ENCODE measurements at regions of chr6 and their contacts with region 1.

Region 1: GRCh38 chr6:37483917-37484785 is 15.5 kb downstream of the CCDC167 start:
- DNase-seq: peak; percentile 53
- H3K4me3 Mint-ChIP-seq: no peak overlapping the region
- H3K27ac Mint-ChIP-seq: no peak overlapping the region
- H3K4me1 Mint-ChIP-seq: peaks cover 15% of the 10 kb centered on the region
- H3K27me3 Mint-ChIP-seq: no peaks in the 10 kb centered on the region

Region 2: GRCh38 chr6:37516076-37516919 is 32.1 kb after region 1 on chr6:
- intact Hi-C with region 1: loop called (anchors 1 kb)
- DNase-seq: peak; percentile 81
- H3K4me3 Mint-ChIP-seq: peak overlapping the region; percentile 75
- H3K27ac Mint-ChIP-seq: peak overlapping the region; percentile 92
- H3K4me1 Mint-ChIP-seq: peaks cover 57% of the 10 kb centered on the region
- H3K27me3 Mint-ChIP-seq: peaks cover 9% of the 10 kb centered on the region

Region 3: GRCh38 chr6:37653933-37654565 is 169.9 kb after region 1 on chr6:
- intact Hi-C with region 1: loop called (anchors 1 kb)
- DNase-seq: peak; percentile 34
- H3K4me3 Mint-ChIP-seq: no peak overlapping the region
- H3K27ac Mint-ChIP-seq: no peak overlapping the region
- H3K4me1 Mint-ChIP-seq: peaks cover 11% of the 10 kb centered on the region
- H3K27me3 Mint-ChIP-seq: peaks cover 11% of the 10 kb centered on the region

Region 4: GRCh38 chr6:37691904-37692806 is 208.0 kb after region 1 on chr6:
- intact Hi-C with region 1: loop called (anchors 1 kb)
- DNase-seq: peak; percentile 65
- H3K4me3 Mint-ChIP-seq: no peak overlapping the region
- H3K27ac Mint-ChIP-seq: no peak overlapping the region
- H3K4me1 Mint-ChIP-seq: peaks cover 18% of the 10 kb centered on the region
- H3K27me3 Mint-ChIP-seq: peaks cover 28% of the 10 kb centered on the region

Region 5: GRCh38 chr6:39102071-39102820 is 1618.1 kb after region 1 on chr6:
- intact Hi-C with region 1: no loop called
- DNase-seq: no peak
- H3K4me3 Mint-ChIP-seq: no peak overlapping the region
- H3K27ac Mint-ChIP-seq: no peak overlapping the region
- H3K4me1 Mint-ChIP-seq: peaks cover 14% of the 10 kb centered on the region
- H3K27me3 Mint-ChIP-seq: peaks cover 6% of the 10 kb centered on the region